ENCODE measurements at regions of chr7 and their contacts with region 1.

Region 1: DNA sequence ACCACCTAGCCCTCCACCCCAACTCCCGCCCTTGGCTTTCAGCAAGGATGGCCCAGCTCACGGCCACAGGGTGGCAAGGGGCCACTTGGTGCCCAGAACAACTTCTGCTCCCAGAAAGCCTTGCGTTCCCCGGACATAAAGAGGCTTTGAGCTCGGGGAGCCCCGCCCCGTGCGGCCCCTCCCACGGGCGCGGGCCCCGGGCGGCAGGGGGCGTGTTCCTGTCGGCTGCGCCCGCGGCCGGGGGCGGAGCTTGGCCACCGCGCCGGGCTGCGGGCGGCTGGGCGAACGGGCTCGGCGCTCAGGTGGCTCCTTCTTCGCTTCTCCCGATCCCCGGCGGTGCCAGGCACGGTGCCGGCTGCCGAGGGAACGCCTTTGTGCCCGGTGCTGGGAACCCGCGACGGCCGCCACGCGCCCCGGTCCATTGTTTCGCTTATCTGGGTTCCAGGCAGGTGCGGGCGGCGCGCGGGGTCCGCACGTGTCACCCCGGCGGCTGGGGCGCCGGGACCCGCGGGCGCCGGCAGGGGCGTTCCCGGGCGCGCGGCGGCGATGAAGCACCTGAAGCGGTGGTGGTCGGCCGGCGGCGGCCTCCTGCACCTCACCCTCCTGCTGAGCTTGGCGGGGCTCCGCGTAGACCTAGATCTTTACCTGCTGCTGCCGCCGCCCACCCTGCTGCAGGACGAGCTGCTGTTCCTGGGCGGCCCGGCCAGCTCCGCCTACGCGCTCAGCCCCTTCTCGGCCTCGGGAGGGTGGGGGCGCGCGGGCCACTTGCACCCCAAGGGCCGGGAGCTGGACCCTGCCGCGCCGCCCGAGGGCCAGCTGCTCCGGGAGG is at the start of gene NFE2L3:
- DNase-seq: peak; percentile 93
- ATAC-seq: peak; percentile 70
- H3K4me3 Mint-ChIP-seq: peak within 1 kb of the TSS; percentile 96
- H3K27ac Mint-ChIP-seq: peak within 1 kb of the TSS; percentile 93
- H3K4me1 Mint-ChIP-seq: peaks cover 50% of the 10 kb centered on the region
- H3K27me3 Mint-ChIP-seq: no peaks in the 10 kb centered on the region
- total RNA-seq, gene NFE2L3: 10.0 to 10.3 TPM

Region 2: GRCh38 chr7:26090927-26091519 is 61.1 kb before region 1 on chr7:
- POLR2A ChIA-PET with region 1: interaction called, 10 read pairs
- DNase-seq: no peak
- ATAC-seq: peak; percentile 46
- H3K4me3 Mint-ChIP-seq: peak overlapping the region; percentile 20
- H3K27ac Mint-ChIP-seq: peak overlapping the region; percentile 17
- H3K4me1 Mint-ChIP-seq: peaks cover 16% of the 10 kb centered on the region
- H3K27me3 Mint-ChIP-seq: peaks cover 2% of the 10 kb centered on the region

Region 3: GRCh38 chr7:26097852-26098668 is 54.1 kb before region 1 on chr7:
- POLR2A ChIA-PET with region 1: interaction called, 18 read pairs
- DNase-seq: no peak
- ATAC-seq: peak; percentile 43
- H3K4me3 Mint-ChIP-seq: peak overlapping the region; percentile 68
- H3K27ac Mint-ChIP-seq: peak overlapping the region; percentile 88
- H3K4me1 Mint-ChIP-seq: peaks cover 39% of the 10 kb centered on the region
- H3K27me3 Mint-ChIP-seq: no peaks in the 10 kb centered on the region

Region 4: GRCh38 chr7:26166684-26167271 is 14.6 kb after region 1 on chr7:
- POLR2A ChIA-PET with region 1: interaction called, 11 read pairs
- DNase-seq: no peak
- ATAC-seq: peak; percentile 45
- H3K4me3 Mint-ChIP-seq: peak overlapping the region; percentile 5
- H3K27ac Mint-ChIP-seq: peak overlapping the region; percentile 74
- H3K4me1 Mint-ChIP-seq: peaks cover 30% of the 10 kb centered on the region
- H3K27me3 Mint-ChIP-seq: no peaks in the 10 kb centered on the region

Region 5: GRCh38 chr7:26187380-26188205 is 35.4 kb after region 1 on chr7:
- POLR2A ChIA-PET with region 1: interaction called, 32 read pairs
- DNase-seq: no peak
- ATAC-seq: peak; percentile 6
- H3K4me3 Mint-ChIP-seq: peak overlapping the region; percentile 44
- H3K27ac Mint-ChIP-seq: peak overlapping the region; percentile 73
- H3K4me1 Mint-ChIP-seq: peaks cover 60% of the 10 kb centered on the region
- H3K27me3 Mint-ChIP-seq: no peaks in the 10 kb centered on the region

Region 6: DNA sequence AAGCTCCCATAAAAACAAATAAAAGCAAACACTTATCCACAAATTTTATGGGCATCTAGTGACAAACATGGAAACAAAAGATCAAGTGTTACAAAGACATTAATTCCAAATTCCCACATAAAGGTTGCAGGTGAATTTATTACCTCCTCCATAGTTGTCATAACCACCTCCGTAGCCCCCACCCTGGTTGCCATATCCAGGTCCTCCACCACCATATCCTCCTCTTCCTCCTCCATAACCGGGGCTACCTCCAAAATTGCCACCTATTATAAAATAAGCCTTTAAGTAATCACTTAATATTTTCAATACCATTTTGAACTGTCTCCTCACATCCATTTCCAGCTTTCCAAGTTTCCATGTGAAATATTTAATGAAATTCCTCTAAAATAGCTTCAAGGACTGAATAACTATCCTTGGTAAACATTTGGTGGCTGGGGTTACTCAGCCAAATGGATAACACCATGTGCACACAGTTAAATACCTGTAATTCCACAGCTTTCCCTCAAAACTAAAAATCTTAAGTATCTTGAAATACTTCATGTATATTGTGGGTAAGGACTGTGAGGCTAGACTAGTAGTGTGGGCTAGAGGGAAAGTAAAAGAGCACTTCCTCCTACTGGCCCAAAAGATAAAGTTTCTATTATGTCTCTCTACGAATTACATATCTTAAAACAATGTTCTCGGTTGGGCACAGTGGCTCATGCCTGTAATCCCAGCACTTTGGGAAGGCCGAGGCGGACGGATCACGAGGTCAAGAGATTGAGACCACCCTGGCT is 41.5 kb after region 1 on chr7:
- POLR2A ChIA-PET with region 1: interaction called, 32 read pairs
- DNase-seq: no peak
- ATAC-seq: peak; percentile 35
- H3K4me3 Mint-ChIP-seq: peak overlapping the region; percentile 85
- H3K27ac Mint-ChIP-seq: peak overlapping the region; percentile 82
- H3K4me1 Mint-ChIP-seq: peaks cover 79% of the 10 kb centered on the region
- H3K27me3 Mint-ChIP-seq: no peaks in the 10 kb centered on the region

Region 7: DNA sequence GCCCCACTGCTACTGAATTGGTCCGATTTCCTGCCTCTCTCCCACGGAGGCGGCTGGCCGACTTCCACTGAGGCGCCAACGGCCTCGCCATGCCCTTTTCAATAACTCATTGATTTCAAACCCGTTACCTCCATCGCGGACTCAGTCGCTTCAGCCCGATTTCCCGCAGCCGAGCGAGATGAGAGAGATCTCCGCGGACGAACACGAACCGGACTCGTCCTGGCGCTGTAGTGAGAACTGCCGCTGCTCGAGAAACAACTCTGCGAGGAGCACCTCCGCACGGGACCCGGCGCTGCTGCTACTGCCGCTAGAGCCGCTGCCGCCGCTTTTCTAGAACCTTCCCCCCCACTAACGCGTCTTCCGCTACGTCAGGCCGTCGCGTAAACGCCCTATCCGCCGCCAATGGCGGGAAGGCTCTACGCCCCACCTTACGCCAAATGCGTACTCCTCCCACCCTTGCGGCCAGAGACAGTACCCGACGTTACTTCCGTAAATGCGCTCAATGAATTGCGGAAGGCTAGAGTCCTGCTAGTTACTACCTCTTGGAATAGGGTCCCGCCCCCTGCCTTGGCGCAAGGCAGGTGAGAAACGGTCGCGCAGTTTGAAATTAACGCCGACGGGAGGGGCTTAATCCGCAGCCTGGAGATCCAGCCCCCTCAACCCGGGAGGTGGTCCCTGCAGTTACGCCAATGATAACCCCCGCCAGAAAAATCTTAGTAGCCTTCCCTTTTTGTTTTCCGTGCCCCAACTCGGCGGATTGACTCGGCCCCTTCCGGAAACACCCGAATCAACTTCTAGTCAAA is 48.5 kb after region 1 on chr7 and contains the start of gene HNRNPA2B1:
- POLR2A ChIA-PET with region 1: interaction called, 47 read pairs
- DNase-seq: peak; percentile 98
- ATAC-seq: peak; percentile 68
- H3K4me3 Mint-ChIP-seq: peak within 1 kb of the TSS; percentile 99
- H3K27ac Mint-ChIP-seq: peak within 1 kb of the TSS; percentile 99
- H3K4me1 Mint-ChIP-seq: peaks cover 40% of the 10 kb centered on the region
- H3K27me3 Mint-ChIP-seq: no peaks in the 10 kb centered on the region
- total RNA-seq, gene HNRNPA2B1: 653 to 667 TPM